ENCODE measurements at regions of chr4 and their contacts with region 1.

Region 1: DNA sequence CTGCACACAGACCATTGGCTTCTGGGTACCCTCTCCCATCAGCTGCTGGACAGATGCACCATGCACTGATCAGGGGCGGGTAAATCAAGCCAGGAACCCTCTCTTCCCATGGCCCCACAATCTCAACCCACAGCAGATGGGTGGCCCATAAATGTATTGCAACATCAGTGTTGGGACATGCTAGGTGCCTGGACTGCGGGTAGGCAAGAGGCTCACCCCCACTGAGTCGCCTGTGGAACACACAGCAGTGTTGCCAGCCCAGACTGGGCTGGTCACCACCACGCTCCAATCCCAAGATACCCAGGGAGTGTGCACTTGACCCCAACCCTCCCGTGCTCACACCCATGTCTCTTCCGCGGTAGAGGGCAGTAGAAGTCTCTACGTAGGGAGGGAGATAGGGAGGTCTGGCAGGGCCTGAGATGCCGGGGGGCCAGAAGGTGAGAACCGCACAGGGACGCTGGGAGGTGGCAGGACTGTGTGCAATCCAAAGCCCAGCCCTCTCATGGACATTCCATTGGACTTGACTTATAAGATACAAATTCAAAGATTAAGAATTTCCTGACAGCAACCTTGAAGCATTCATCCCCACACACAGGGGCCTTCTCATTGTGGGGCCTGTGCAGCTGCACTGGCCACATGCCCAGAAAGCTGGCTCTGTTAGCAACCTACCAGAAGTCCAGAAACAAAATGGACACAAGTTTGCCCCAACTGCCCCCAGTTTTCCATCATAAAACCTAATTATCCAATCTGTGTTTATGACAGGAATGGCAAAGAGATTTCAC is 183.7 kb downstream of the NSUN7 start:
- DNase-seq: no peak
- ATAC-seq: peak in 2 of 4 donors; percentile 29 to 57
- H3K4me3 ChIP-seq: no peak overlapping the region
- H3K27ac ChIP-seq: no peak overlapping the region
- H3K4me1 ChIP-seq: peaks cover 0 to 12% (median 0%) of the 10 kb centered on the region in 12 donors
- H3K27me3 ChIP-seq: no peaks in the 10 kb centered on the region
- CTCF ChIP-seq: no peak
- POLR2A ChIP-seq: no peak

Region 2: DNA sequence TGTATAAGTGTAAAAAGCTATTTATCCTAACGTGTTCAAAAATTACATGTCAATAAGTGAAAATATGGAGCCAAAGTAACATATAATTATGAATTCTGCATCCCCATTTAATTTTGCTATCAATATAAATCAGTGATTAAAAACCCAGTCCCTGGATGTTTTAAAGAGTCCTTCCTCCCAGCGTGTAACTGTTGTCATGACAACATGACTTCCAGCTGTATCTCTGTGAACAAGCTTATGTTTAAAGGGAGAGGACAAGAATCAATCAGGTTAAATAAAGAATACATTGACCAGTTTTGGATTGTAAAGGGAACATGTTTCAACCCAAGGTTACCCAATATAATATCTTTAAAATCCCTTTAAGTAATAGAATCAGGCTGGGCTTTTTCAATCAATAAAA is 36.0 kb after region 1 on chr4:
- intact Hi-C with region 1: loop called in 5 of 10 experiments (anchors 5 to 10 kb)
- DNase-seq: no peak
- ATAC-seq: no peak
- H3K4me3 ChIP-seq: no peak overlapping the region
- H3K27ac ChIP-seq: no peak overlapping the region
- H3K4me1 ChIP-seq: peaks cover 0 to 2% (median 0%) of the 10 kb centered on the region in 12 donors
- H3K27me3 ChIP-seq: no peaks in the 10 kb centered on the region
- CTCF ChIP-seq: no peak
- POLR2A ChIP-seq: no peak